B cell (primary cell): ENCODE measurements at regions of chr7 and their contacts with region 1.

Region 1: DNA sequence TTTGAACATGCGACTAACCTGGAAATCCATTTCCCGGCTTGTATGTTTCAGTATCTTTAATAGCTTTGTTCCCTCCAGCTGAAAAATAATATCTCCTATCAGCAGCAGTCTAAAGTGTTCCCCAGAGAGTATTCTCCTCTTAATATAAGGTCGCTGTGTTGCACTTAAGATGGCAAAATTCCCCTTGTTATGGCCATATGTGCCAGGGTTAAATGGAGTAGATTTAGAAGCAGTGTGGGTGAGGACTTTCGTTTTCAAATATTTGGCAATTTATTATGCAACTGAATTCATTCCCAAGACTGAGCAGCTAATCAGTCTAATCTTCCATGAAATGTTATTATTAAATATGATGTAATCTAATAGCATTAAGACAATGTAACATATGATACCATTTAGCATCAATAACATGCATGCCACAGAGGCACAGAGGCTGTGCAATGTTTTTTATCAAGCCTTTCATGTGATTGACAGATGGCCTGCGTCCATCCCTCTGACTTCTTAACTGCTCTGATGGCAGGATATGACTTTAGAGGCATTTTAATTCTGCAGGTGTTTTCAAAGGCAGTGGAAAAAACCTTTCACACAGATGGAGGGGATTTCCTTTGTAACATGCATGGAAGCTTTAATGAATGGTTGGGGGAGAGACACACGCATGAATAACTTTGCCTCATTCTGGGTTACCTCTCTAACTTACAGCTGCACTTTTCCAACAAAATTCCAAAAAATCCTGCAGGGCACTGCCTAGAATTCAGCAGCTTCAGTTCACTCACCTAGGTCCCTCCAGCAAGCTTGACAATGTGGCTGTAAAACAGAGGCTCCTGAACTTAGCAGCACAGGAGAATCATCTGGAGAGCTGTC is 55.1 kb upstream of the ZPBP start:
- DNase-seq: peak; percentile 82
- ATAC-seq: peak; percentile 74
- H3K4me3 ChIP-seq: no peak overlapping the region
- H3K4me3 Mint-ChIP-seq: peak overlapping the region; percentile 77
- H3K27ac ChIP-seq: peak overlapping the region; percentile 77 to 89
- H3K27ac Mint-ChIP-seq: peak overlapping the region; percentile 91
- H3K4me1 ChIP-seq: peaks cover 74 to 87% of the 10 kb centered on the region in 2 donors
- H3K4me1 Mint-ChIP-seq: peaks cover 87% of the 10 kb centered on the region
- H3K27me3 ChIP-seq: no peaks in the 10 kb centered on the region
- H3K27me3 Mint-ChIP-seq: no peaks in the 10 kb centered on the region
- CTCF ChIP-seq: no peak

Region 2: DNA sequence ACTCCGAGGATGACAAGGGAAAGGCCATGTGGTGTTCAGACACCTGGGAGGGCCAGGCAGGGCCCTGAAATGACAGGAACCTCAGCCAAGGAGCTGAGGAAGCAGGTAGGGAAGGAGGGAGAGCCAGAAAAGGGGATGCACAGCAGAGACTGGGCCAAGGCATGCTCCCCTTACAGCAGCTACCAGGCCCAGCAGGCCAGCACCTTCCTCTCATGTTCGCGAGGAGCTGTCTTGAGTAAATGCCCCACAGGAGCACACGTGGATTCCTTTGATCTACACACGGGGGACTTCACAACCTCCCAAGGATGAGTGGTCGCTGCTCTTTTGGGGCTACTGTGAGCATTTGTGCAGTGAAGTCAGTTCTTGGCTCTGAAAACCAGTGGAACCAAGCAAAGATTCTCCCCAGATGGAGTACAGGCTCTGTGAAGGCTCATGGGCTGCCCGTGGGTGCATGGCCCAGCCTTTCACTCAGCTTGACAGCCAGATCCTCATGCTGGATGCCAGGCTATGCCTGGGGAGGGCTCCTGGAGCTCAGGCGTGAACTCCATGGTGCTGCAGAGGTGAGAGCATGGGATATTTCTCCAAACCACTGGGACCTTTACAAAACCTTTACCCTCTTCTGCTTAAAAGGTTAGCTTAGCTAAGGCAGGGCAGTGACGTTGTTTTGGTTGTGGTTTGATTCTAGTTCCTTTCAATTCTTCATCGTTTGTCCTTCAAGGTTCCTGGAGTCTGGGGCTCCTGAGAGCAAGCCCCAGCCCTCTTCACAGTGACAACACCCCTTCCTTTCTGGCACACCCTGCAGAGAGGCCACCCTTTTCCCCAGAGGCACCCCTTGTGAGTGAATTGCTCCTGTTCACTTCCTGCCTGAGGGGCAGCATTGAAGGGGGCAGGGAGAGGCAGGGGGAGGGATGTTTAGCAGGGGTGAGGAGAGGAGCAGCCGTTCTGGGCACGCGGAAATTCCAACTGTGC is 19.1 kb after region 1 on chr7:
- CTCF ChIA-PET with region 1: interaction called, 3 read pairs
- POLR2A ChIA-PET with region 1: interaction called, 5 read pairs
- intact Hi-C with region 1: loop called (anchors 1 kb)
- DNase-seq: peak; percentile 37
- ATAC-seq: peak; percentile 76
- H3K4me3 ChIP-seq: no peak overlapping the region
- H3K4me3 Mint-ChIP-seq: peak overlapping the region; percentile 49
- H3K27ac ChIP-seq: peak overlapping the region; percentile 13 to 40
- H3K27ac Mint-ChIP-seq: peak overlapping the region; percentile 78
- H3K4me1 ChIP-seq: peaks cover 25 to 26% of the 10 kb centered on the region in 2 donors
- H3K4me1 Mint-ChIP-seq: peaks cover 43% of the 10 kb centered on the region
- H3K27me3 ChIP-seq: no peaks in the 10 kb centered on the region
- H3K27me3 Mint-ChIP-seq: no peaks in the 10 kb centered on the region
- CTCF ChIP-seq: no peak

Region 3: GRCh38 chr7:50342616-50343114 is 194.5 kb after region 1 on chr7:
- CTCF ChIA-PET with region 1: interaction called, 3 read pairs
- POLR2A ChIA-PET with region 1: interaction called, 13 read pairs
- intact Hi-C with region 1: no loop called
- DNase-seq: peak; percentile 39
- ATAC-seq: no peak
- H3K4me3 ChIP-seq: no peak overlapping the region
- H3K4me3 Mint-ChIP-seq: peak overlapping the region; percentile 74
- H3K27ac ChIP-seq: peak overlapping the region; percentile 46 to 95
- H3K27ac Mint-ChIP-seq: peak overlapping the region; percentile 92
- H3K4me1 ChIP-seq: peaks cover 64 to 79% of the 10 kb centered on the region in 2 donors
- H3K4me1 Mint-ChIP-seq: peaks cover 68% of the 10 kb centered on the region
- H3K27me3 ChIP-seq: no peaks in the 10 kb centered on the region
- H3K27me3 Mint-ChIP-seq: no peaks in the 10 kb centered on the region
- CTCF ChIP-seq: no peak